PC-9 (cell line): ENCODE measurements at regions of chr11 and their contacts with region 1.

Region 1: GRCh38 chr11:65003282-65003681 is 6.5 kb upstream of the BATF2 start:
- DNase-seq: no peak
- H3K4me3 ChIP-seq: no peak overlapping the region
- H3K27ac ChIP-seq: no peak overlapping the region
- H3K4me1 ChIP-seq: peaks cover 18% of the 10 kb centered on the region
- H3K27me3 ChIP-seq: no peaks in the 10 kb centered on the region
- CTCF ChIP-seq: no peak

Region 2: DNA sequence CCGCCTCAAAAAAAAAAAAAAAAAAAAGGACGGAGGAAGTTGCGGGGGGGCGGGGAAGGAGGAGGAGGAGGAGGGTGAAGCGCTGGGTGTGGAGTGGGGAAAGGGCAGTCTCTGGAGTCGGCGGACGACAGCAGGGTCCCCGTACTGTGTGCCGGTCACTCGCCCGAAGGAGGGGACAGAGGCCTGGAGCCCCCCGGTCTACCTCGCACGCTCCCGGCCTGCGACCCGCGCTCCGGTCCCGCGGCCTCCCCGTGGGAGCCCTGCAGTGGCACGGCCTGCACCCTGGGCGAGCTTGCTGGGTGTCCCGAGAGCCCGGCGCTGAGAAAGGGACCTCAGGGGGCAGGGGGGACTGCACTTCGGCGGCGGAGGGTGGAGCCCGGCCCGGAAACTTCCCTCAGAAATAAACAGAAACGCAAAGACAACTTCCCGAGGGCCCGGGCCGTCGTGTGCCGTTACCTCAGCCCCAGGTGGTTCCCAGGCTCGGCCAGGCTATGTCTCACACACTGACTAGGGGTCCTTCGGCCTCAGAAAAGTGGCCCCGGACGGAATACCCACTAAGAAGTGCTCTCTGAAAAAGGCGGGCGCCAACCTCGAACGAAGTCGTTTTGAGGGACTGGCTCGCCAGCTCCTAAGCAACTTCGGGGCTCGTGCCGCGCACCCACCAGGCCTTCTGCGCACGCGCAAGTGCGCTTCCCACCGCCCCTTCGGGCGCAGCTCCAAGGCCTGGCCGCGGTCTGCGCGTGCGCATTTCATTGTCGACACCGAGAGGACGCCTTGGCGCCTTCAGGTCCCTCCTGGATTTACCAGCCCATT is 31.7 kb before region 1 on chr11 and contains the start of gene MAJIN:
- CTCF ChIA-PET with region 1: no interaction called
- POLR2A ChIA-PET with region 1: interaction called, 5 read pairs
- intact Hi-C with region 1: loop called (anchors 2 kb)
- DNase-seq: peak; percentile 66 to 93
- H3K4me3 ChIP-seq: peak within 1 kb of the TSS; percentile 52; the same call in 1 of the 2 replicates
- H3K27ac ChIP-seq: peak within 1 kb of the TSS; percentile 95
- H3K4me1 ChIP-seq: peaks cover 26% of the 10 kb centered on the region
- H3K27me3 ChIP-seq: 0 out of 2 replicates have a peak, but pooled peaks cover under 1% of the 10 kb centered on the region
- CTCF ChIP-seq: no peak
- total RNA-seq, gene MAJIN: 4.5 and 7.1 TPM in 2 replicates

Region 3: GRCh38 chr11:65013692-65014145 is 10.4 kb after region 1 on chr11:
- CTCF ChIA-PET with region 1: interaction called, 21 read pairs
- POLR2A ChIA-PET with region 1: no interaction called
- intact Hi-C with region 1: no loop called
- DNase-seq: peak in 1 of 2 experiments; percentile 80
- H3K4me3 ChIP-seq: peak overlapping the region; percentile 76
- H3K27ac ChIP-seq: peak overlapping the region; percentile 71
- H3K4me1 ChIP-seq: peaks cover 14% of the 10 kb centered on the region
- H3K27me3 ChIP-seq: no peaks in the 10 kb centered on the region
- CTCF ChIP-seq: peak; percentile 75

Region 4: GRCh38 chr11:65652511-65653231 is 649.4 kb after region 1 on chr11:
- CTCF ChIA-PET with region 1: no interaction called
- POLR2A ChIA-PET with region 1: interaction called, 12 read pairs
- intact Hi-C with region 1: no loop called
- DNase-seq: peak; percentile 82 to 98
- H3K4me3 ChIP-seq: peak overlapping the region; percentile 64
- H3K27ac ChIP-seq: peak overlapping the region; percentile 76
- H3K4me1 ChIP-seq: peaks cover 35% of the 10 kb centered on the region
- H3K27me3 ChIP-seq: no peaks in the 10 kb centered on the region
- CTCF ChIP-seq: no peak